ENCODE measurements at regions of chr1 and their contacts with region 1.

Region 1: DNA sequence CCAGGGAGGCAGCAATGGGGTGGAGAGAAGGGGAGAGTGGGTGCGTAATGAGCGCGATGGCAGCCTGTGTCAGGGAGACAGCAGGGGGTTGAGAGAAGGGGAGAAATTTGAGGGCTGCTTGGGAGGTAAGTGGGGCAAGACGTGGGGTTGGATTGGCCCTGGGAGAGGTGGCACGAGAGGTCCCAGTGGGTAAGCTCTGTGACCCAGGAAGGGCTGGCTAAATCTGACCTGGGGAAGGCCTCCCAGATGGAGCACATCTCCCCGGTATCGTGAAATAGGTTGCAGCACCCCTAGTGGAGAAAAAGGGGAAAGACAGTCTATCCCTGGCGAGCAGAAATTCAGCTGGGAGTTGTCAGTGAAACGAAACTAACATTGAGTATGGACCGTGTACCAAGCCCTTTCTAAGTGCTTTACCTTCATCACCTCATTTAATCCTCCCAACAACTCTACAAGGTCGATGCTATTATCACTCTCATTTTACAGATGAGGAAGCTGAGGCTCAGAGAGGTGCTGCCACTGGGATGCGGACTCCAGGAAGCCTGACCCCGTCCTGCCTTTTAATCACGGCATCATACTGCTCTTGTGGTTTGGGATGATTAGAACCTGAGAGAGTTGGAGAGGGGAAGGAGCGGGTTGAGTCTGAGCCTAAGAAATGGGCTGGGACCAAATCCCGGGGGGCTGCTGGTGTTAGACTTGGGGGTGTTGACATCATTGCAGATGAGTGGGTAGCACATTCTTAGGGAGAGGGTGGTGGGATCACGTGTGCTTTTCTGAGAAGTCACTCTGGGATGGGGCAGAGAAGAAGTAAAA is 56.6 kb upstream of the RPL11 start:
- H3K4me3 ChIP-seq: peak overlapping the region; percentile 15
- H3K27ac ChIP-seq: no peak overlapping the region
- H3K4me1 ChIP-seq: no peaks in the 10 kb centered on the region
- CTCF ChIP-seq: peak; percentile 75

Region 2: GRCh38 chr1:23539698-23540266 is 95.3 kb before region 1 on chr1:
- CTCF ChIA-PET with region 1: interaction called, 506 read pairs
- POLR2A ChIA-PET with region 1: interaction called, 9 read pairs
- H3K4me3 ChIP-seq: no peak overlapping the region
- H3K27ac ChIP-seq: no peak overlapping the region
- H3K4me1 ChIP-seq: no peaks in the 10 kb centered on the region
- CTCF ChIP-seq: peak; percentile 95

Region 3: DNA sequence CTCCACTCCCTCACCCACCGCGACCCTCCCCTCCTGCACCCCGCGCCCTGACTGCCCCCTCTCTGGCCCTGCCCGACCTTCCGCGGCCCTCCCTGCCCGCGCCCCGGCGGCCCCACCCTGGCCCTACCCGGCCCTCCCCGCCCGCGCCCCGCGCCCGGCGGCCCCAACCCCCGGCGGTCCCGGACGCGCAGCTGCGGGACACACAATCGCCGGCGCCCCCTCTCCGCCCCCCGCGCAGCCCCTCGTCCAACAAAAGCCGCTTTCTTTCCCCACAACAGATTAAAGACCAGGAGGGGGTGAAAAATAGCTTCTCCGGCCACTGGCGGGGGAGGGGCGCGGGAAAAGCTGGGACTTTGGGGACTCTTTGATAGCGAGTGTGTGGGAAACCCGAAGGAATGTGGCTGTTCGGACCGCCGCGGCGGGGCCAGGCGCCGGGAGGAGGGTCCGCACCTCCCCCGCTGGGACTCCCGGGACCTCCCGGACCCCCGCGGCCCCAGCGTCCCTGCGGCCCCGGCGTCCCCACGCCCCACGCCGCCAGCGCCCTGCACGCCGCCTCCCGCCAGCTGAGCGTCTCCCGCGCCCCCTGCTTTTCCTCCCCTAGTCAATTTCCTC is 66.9 kb before region 1 on chr1:
- CTCF ChIA-PET with region 1: interaction called, 27 read pairs
- POLR2A ChIA-PET with region 1: no interaction called
- H3K4me3 ChIP-seq: peak overlapping the region; percentile 12
- H3K27ac ChIP-seq: no peak overlapping the region; the same call in 1 of the 2 replicates
- H3K4me1 ChIP-seq: no peaks in the 10 kb centered on the region; the same call in 1 of the 2 replicates
- CTCF ChIP-seq: no peak

Region 4: DNA sequence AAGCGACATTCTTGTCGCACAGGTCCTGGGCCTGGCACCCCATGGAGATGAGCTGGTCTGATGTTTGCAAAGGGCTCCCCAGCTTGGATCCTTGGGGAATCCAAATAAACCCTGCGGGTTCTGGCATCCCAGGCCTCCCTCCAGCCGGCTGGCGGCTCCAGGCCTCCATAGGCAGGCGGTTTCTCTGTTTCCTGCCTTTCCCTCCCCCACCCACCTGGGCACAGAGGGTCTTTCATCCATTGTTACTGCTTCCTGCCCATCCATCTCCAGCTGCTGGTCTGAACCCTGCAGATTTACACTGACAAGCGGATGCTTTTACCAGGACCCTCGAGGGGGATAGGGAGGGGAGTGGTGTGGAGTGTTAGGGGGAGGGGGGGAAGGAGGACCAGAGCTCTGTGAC is 36.6 kb before region 1 on chr1:
- CTCF ChIA-PET with region 1: interaction called, 23 read pairs
- POLR2A ChIA-PET with region 1: interaction called, 3 read pairs
- H3K4me3 ChIP-seq: no peak overlapping the region
- H3K27ac ChIP-seq: no peak overlapping the region
- H3K4me1 ChIP-seq: no peaks in the 10 kb centered on the region; the same call in 1 of the 2 replicates
- CTCF ChIP-seq: no peak

Region 5: DNA sequence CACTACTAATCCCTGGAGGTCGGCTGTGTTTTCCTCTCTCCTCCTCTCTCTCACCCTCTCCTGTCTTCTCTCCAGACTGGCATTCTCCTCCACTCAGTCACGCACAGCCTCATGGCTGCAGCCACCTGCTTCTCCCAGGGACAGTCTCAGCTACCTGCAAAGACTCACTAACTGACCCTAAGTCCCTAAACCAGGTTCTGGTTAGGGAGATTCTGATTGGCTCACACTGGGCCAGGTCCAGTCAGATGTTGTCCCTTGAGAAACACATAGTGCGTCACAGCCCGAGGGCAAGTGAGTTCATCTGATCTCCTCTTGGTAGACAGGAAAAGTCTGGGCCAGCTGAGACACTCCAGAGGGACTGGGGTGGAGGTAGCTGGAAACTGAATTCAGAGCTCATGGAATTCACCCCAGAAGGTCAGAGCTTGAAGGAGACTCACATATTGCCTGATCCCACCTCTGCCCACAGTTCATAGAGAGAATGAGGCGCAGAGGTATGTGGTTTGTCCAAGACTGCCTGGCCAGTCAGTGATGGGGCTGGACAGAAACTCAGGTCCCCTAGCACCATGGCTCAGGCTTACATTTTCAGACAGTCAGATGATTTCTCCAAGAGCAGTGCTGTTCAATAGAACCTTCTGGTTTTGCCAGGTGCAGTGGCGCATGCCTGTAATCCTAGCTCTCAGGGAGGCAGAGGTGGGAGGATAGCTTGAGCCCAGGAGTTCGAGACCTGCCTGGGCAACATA is 16.2 kb after region 1 on chr1:
- CTCF ChIA-PET with region 1: interaction called, 64 read pairs
- POLR2A ChIA-PET with region 1: no interaction called
- H3K4me3 ChIP-seq: no peak overlapping the region
- H3K27ac ChIP-seq: no peak overlapping the region
- H3K4me1 ChIP-seq: peaks cover 4% of the 10 kb centered on the region; the same call in 1 of the 2 replicates
- CTCF ChIP-seq: no peak

Region 6: GRCh38 chr1:23664837-23665795 is 30.1 kb after region 1 on chr1:
- CTCF ChIA-PET with region 1: interaction called, 26 read pairs
- POLR2A ChIA-PET with region 1: interaction called, 6 read pairs
- H3K4me3 ChIP-seq: no peak overlapping the region
- H3K27ac ChIP-seq: no peak overlapping the region
- H3K4me1 ChIP-seq: no peaks in the 10 kb centered on the region
- CTCF ChIP-seq: peak; percentile 47

Region 7: DNA sequence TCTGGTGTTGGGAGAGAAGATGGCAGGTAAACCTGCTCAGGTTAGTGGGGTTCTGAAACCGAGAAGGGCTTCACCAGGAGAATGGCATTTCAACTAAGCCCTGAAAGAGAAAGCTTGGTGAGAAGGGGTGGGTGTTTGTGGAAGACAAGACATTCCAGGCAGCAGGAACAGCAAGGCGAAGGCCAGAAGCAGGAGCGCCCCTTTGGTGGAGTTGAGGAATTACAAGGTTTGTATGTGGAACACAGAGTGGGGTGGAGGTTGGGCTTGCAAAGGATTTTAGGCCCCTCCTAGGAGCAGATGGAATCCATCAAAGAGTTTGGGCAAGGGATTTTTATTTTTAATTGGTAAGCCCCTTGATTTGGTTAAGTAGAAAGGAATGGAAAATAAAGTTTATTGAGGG is 83.4 kb after region 1 on chr1:
- CTCF ChIA-PET with region 1: no interaction called
- POLR2A ChIA-PET with region 1: no interaction called
- H3K4me3 ChIP-seq: no peak overlapping the region
- H3K27ac ChIP-seq: no peak overlapping the region
- H3K4me1 ChIP-seq: 0 out of 2 replicates have a peak, but pooled peaks cover 2% of the 10 kb centered on the region
- CTCF ChIP-seq: peak; percentile 39

Region 8: DNA sequence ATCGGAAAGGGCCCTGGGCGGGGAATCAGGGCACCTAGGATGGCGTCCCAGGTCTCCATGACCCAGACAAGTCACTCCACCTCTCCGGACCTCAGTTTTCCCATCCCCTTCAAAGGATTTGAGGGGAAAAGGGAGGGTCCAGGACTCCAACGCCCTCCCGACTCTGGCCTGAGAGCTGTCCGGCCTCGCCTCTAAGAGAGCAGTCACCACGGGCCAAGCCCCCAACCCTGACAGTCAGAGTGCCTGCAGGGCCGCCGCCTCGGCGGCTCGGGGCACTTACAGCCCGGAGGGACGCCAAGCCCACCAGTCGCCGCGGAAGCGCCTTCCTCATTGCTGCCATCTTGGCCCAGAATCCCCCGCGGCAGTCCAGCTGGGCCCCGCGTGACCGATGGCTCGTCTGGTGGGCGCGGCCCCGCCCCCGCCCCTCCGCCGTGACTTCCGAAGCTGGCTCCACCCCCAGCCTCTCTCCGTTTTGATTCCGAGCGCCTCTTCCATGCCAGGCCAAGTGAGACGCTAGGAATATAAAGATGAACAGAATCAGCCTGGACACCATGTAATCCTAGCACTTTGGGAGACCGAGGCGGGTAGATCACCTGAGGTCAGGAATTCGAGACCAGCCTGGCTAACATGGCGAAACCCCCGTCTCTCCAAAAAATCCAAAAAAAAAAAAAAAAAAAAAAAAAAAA is 190.2 kb after region 1 on chr1 and contains the start of gene HMGCL:
- CTCF ChIA-PET with region 1: no interaction called
- POLR2A ChIA-PET with region 1: no interaction called
- H3K4me3 ChIP-seq: peak within 1 kb of the TSS; percentile 97
- H3K27ac ChIP-seq: peak within 1 kb of the TSS; percentile 57
- H3K4me1 ChIP-seq: no peaks in the 10 kb centered on the region
- CTCF ChIP-seq: no peak

Region 9: DNA sequence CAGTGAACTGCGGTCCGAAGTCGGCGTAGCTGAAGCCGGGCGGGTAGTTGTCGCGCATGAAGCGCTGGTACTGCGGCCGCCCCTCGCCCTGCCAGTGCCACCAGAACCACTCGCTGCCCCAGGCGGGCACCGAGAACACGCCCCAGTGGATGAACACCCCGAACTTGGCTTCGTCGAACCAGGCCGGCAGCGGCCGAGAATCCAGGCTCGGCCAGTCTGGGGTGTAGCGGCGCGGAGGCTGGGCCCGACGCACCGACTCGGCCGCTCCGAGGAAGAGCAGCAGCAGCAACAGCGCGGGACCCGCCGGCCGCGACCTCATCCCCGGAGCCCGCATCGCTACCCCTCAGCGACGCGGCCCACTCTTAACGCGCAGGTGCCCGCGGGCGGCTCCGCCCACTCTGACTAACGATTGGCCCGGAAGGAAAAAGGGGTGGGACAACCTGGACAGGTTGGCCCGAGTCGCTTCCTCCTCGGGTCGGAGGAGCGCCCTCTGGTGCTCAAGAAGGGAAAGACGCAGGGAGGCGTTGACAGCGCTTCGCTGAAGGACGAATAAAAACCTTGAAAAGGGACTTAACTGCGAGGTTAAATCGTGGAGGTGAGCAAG is 233.0 kb after region 1 on chr1 and contains the start of gene FUCA1:
- CTCF ChIA-PET with region 1: no interaction called
- POLR2A ChIA-PET with region 1: no interaction called
- H3K4me3 ChIP-seq: peak within 1 kb of the TSS; percentile 81
- H3K27ac ChIP-seq: peak within 1 kb of the TSS; percentile 35; the same call in 1 of the 2 replicates
- H3K4me1 ChIP-seq: 0 out of 2 replicates have a peak, but pooled peaks cover 6% of the 10 kb centered on the region
- CTCF ChIP-seq: peak; percentile 94

Measured in HEK293 (cell line).